ENCODE measurements at regions of chr17 and their contacts with region 1.

Region 1: GRCh38 chr17:45135192-45135977 is at the start of gene ACBD4:
- DNase-seq: peak; percentile 98
- H3K4me3 Mint-ChIP-seq: peak within 1 kb of the TSS; percentile 91
- H3K27ac Mint-ChIP-seq: peak within 1 kb of the TSS; percentile 86
- H3K4me1 Mint-ChIP-seq: peaks cover 17% of the 10 kb centered on the region
- H3K27me3 Mint-ChIP-seq: peaks cover 6% of the 10 kb centered on the region
- total RNA-seq, gene ACBD4: 18.4 to 19.7 TPM

Region 2: DNA sequence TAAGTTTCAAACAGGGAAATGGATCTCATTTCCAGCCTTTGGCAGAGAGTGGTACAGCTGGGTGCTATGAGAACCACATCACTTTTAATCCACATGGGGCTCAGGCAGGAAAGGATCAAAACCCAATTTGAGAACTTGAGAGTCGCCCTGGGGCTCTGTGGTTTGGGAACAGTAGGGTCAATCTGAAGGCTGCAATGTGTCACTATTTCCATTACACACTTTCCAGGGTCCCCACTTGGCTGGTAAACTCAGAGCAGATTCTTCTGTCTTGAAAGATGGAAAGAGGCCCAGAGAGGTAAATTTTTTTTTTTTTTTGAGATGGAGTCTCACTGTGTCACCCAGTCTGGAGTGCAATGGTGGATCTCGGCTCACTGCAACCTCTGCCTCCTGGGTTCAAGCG is 294.4 kb before region 1 on chr17:
- CTCF ChIA-PET with region 1: no interaction called
- POLR2A ChIA-PET with region 1: no interaction called
- DNase-seq: no peak
- H3K4me3 Mint-ChIP-seq: no peak overlapping the region
- H3K27ac Mint-ChIP-seq: no peak overlapping the region
- H3K4me1 Mint-ChIP-seq: no peaks in the 10 kb centered on the region
- H3K27me3 Mint-ChIP-seq: no peaks in the 10 kb centered on the region

Region 3: DNA sequence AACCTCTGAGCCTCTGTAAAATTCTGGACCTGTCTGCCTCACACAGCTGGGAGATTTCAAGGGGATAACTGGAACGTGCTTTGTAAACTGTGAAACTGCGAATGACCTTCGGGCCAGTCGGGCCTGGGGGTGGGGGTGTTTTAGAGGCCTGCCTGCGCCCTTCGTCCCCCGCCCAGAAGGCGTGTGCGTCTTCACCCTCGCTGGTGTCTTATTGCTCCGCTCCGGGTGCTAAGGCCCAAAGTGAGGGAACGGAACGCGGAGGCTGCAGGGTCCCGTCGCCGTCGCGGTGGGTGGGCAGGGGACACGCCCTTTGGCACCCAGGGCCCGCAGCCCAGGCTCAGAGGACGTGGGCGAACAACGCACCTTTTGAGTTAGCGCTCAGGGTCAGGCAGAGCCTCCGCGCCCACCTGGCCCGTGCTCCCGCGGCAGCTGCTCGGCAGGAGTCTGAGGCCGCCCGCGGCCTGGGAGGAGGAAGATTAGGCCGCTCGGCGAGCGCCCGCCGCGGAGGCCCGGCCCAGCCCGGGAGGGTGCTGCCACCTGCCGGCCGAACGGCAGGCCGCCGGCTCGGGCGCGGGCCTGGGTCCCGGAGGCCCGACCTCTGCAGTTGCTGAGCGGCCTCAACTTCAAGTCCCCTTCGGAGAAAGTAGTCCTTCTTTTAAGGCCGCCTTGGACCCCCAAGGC is 113.6 kb before region 1 on chr17:
- CTCF ChIA-PET with region 1: interaction called, 10 read pairs
- POLR2A ChIA-PET with region 1: no interaction called
- DNase-seq: peak; percentile 63
- H3K4me3 Mint-ChIP-seq: no peak overlapping the region
- H3K27ac Mint-ChIP-seq: no peak overlapping the region
- H3K4me1 Mint-ChIP-seq: peaks cover 21% of the 10 kb centered on the region
- H3K27me3 Mint-ChIP-seq: peaks cover 33% of the 10 kb centered on the region

Region 4: GRCh38 chr17:45067637-45068036 is 67.7 kb before region 1 on chr17:
- CTCF ChIA-PET with region 1: interaction called, 26 read pairs
- POLR2A ChIA-PET with region 1: no interaction called
- DNase-seq: no peak
- H3K4me3 Mint-ChIP-seq: no peak overlapping the region
- H3K27ac Mint-ChIP-seq: no peak overlapping the region
- H3K4me1 Mint-ChIP-seq: peaks cover 22% of the 10 kb centered on the region
- H3K27me3 Mint-ChIP-seq: no peaks in the 10 kb centered on the region

Region 5: GRCh38 chr17:45123930-45124796 is 11.2 kb before region 1 on chr17:
- CTCF ChIA-PET with region 1: interaction called, 33 read pairs
- POLR2A ChIA-PET with region 1: no interaction called
- DNase-seq: no peak
- H3K4me3 Mint-ChIP-seq: no peak overlapping the region
- H3K27ac Mint-ChIP-seq: no peak overlapping the region
- H3K4me1 Mint-ChIP-seq: no peaks in the 10 kb centered on the region
- H3K27me3 Mint-ChIP-seq: peaks cover 7% of the 10 kb centered on the region

Region 6: DNA sequence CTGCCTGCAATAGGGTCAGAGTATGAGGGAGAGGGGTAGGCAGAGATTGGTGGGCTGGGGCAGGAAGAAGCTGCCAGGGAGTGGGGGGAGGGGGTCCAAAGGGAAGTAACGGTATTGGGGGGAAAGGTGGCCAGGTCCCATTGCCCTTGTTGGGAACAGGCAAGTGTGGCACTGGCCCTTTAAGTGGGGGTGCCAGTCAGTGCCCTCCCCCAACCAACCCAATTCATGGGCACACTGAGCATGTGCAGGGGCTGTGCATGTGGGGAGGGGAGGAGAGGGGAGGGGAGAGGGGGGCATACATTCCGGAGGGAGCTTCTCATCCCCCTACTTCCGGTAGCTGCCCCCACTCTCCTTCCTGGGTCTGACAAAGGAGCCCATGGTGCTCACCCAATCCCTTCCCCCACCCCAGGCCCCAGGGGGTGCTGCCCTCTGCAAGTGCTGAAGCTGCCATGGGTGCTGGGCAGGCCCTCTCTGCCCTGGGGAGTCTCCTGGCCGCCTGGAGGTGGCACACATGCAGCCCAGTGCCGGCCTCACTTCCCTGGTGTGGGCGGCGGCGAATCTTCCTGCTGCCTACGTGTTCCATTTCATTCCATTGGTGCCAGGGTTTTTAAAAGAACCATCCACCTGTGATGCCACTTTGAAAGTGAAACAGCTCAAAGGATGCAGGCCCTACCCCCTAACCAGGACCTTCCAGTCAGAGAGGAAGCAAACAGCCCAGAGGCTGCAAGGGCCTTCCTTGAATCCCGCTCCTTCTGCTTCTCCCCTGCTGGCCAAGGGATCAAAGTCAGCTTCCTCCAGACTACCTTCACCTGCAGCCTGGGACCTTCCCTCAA is 37.3 kb after region 1 on chr17:
- CTCF ChIA-PET with region 1: interaction called, 33 read pairs
- POLR2A ChIA-PET with region 1: no interaction called
- DNase-seq: peak; percentile 66
- H3K4me3 Mint-ChIP-seq: peak overlapping the region; percentile 71
- H3K27ac Mint-ChIP-seq: peak overlapping the region; percentile 98
- H3K4me1 Mint-ChIP-seq: peaks cover 24% of the 10 kb centered on the region
- H3K27me3 Mint-ChIP-seq: no peaks in the 10 kb centered on the region

Region 7: DNA sequence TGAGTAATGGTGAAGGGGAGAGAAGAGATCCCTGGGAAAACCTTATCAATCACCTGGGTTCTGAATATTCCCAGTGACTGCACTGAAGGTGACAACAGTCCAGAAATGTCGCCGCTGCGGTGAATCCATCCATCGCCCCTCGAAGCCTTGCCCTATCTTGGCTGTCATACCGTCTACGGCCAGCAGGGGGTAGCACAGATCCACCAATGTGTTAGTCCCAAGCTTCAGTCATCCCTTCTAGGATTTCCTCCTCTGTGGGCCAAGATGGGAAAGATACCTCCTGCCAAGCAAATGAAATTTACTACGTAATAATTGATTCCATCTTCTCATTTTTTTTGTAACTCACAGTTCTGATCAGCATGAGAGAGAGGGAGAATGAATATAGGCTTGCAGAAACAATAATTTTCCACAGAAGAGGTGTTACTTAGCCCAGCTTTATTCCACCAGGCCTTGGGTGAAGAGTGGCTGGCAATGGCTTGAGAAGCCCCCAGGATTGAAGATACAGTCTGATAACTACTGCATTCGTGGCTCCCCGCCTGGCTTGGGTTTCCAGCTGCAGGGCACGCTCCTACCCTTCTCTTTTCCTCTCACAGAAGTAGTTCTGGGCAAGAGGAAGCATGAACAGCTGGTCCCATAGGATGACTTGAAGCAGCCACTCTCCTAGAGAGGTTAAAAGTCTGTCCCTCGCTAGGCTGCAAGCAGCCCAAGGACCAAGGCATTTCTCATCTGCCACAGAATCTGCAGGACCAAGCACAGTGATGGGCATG is 83.7 kb after region 1 on chr17:
- CTCF ChIA-PET with region 1: interaction called, 26 read pairs
- POLR2A ChIA-PET with region 1: no interaction called
- DNase-seq: peak; percentile 88
- H3K4me3 Mint-ChIP-seq: peak overlapping the region; percentile 85
- H3K27ac Mint-ChIP-seq: peak overlapping the region; percentile 82
- H3K4me1 Mint-ChIP-seq: peaks cover 38% of the 10 kb centered on the region
- H3K27me3 Mint-ChIP-seq: no peaks in the 10 kb centered on the region

Region 8: GRCh38 chr17:45270828-45271418 is 135.5 kb after region 1 on chr17:
- CTCF ChIA-PET with region 1: interaction called, 10 read pairs
- POLR2A ChIA-PET with region 1: no interaction called
- DNase-seq: peak; percentile 58
- H3K4me3 Mint-ChIP-seq: no peak overlapping the region
- H3K27ac Mint-ChIP-seq: no peak overlapping the region
- H3K4me1 Mint-ChIP-seq: no peaks in the 10 kb centered on the region
- H3K27me3 Mint-ChIP-seq: no peaks in the 10 kb centered on the region

Measured in activated CD4-positive, alpha-beta T cell treated with anti-CD3 and anti-CD28 coated beads, Interleukin-2, amount 10 ng/mL, durations not matched to agents 7 days and 5 days (primary cell).